Activated naive CD4-positive, alpha-beta T cell treated with anti-CD3 and anti-CD28 coated beads for 36 hours (primary cell): ENCODE measurements at regions of chr2 and their contacts with region 1.

Region 1: GRCh38 chr2:181058378-181059269 is 78.2 kb downstream of the UBE2E3 start:
- DNase-seq: peak; percentile 61
- H3K4me3 Mint-ChIP-seq: no peak overlapping the region
- H3K27ac Mint-ChIP-seq: no peak overlapping the region
- H3K4me1 Mint-ChIP-seq: no peaks in the 10 kb centered on the region
- H3K27me3 Mint-ChIP-seq: no peaks in the 10 kb centered on the region

Region 2: DNA sequence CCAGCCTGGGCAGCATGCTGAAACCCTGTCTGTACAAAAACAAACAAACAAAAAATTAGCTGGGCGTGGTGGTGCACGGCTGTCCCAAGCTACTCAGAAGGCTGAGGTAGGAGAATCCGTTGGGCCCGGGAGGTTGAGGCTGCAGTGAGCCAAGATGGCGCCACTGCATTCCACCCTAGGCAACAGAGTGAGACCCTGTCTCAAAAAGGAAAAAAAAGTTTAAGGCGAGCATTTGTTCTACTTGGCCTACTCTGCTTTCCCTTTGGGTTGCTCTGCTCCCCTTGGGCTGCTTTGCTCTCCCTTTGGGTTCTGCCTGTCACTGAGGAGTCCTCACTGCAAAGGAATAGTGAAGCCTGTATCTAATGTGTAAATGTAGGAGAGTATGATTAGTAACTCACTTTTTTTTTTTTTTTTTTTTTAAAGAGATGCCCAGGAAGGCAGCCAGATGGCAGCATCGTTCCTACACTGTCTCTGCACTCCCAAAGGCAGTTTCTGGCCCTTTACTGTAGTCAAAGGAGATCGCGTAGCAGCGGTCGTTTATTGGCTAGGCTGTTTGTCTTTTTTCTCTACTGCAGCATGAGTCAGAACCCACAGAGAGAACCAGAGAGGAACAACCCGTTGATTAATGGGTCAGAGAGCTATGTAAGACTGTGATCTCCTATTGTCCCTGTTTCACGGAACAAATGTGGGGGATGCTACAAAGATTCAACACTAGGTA is 933.2 kb before region 1 on chr2:
- CTCF ChIA-PET with region 1: interaction called, 13 read pairs
- intact Hi-C with region 1: loop called (anchors 1 kb)
- DNase-seq: peak; percentile 64
- H3K4me3 Mint-ChIP-seq: no peak overlapping the region
- H3K27ac Mint-ChIP-seq: no peak overlapping the region
- H3K4me1 Mint-ChIP-seq: peaks cover 3% of the 10 kb centered on the region
- H3K27me3 Mint-ChIP-seq: peaks cover 10% of the 10 kb centered on the region

Region 3: GRCh38 chr2:180240774-180241173 is 817.9 kb before region 1 on chr2:
- CTCF ChIA-PET with region 1: no interaction called
- intact Hi-C with region 1: loop called (anchors 5 kb)
- DNase-seq: no peak
- H3K4me3 Mint-ChIP-seq: no peak overlapping the region
- H3K27ac Mint-ChIP-seq: no peak overlapping the region
- H3K4me1 Mint-ChIP-seq: no peaks in the 10 kb centered on the region
- H3K27me3 Mint-ChIP-seq: peaks cover 1% of the 10 kb centered on the region

Region 4: GRCh38 chr2:180604077-180604476 is 454.5 kb before region 1 on chr2:
- CTCF ChIA-PET with region 1: no interaction called
- intact Hi-C with region 1: loop called (anchors 2 kb)
- DNase-seq: peak; percentile 8
- H3K4me3 Mint-ChIP-seq: no peak overlapping the region
- H3K27ac Mint-ChIP-seq: no peak overlapping the region
- H3K4me1 Mint-ChIP-seq: no peaks in the 10 kb centered on the region
- H3K27me3 Mint-ChIP-seq: no peaks in the 10 kb centered on the region

Region 5: DNA sequence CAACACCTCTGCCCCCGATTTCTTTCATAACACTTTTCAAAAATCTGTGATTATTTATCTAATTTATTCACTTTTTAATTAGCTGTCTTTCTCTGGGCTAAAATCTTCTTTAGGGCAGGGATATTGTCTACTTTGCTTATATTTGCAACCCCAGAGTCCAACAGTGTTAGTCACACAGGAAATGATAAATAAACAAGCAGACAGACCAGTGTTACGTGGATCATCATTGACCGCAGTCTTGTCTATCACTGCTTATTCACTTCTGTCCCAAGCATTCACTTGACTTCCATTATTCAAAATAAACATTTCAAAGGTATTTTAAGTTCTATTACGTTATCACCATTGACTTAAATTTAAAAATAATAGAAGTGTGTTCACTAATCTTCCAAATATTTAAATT is 315.8 kb before region 1 on chr2:
- CTCF ChIA-PET with region 1: no interaction called
- intact Hi-C with region 1: loop called (anchors 10 kb)
- DNase-seq: no peak
- H3K4me3 Mint-ChIP-seq: no peak overlapping the region
- H3K27ac Mint-ChIP-seq: no peak overlapping the region
- H3K4me1 Mint-ChIP-seq: no peaks in the 10 kb centered on the region
- H3K27me3 Mint-ChIP-seq: peaks cover 2% of the 10 kb centered on the region

Region 6: DNA sequence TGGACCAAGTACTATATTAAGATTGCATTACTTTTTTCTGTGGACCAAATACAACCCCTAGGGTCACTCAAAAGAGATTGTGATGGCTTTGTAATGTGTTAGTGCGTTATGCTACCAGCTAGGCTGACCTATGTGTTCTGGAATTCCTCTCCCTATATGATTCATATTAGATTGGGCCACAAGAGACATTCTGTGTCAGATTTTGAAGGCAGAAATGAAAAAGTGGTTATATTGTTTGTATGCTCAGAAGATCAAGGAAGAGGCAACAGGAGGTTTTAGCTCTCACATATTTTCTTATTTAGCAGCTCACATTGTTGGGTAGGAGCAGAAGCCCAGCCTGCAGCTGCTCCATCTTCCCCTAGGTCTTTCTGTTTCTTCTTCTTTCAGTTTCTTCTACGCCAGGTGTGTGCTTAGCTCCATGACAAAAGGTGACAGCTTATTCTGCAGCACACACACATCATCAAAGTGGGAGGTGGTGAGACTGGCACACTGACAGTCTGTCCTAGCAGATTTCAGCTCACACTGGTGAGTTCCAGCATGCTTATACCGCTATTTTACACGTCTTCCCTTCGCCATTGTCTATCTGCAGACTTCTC is 235.0 kb before region 1 on chr2:
- CTCF ChIA-PET with region 1: no interaction called
- intact Hi-C with region 1: loop called (anchors 10 kb)
- DNase-seq: no peak
- H3K4me3 Mint-ChIP-seq: no peak overlapping the region
- H3K27ac Mint-ChIP-seq: no peak overlapping the region
- H3K4me1 Mint-ChIP-seq: no peaks in the 10 kb centered on the region
- H3K27me3 Mint-ChIP-seq: peaks cover 4% of the 10 kb centered on the region